Transverse colon (tissue), 4 donors: ENCODE measurements at regions of chr3 and their contacts with region 1.

Region 1: DNA sequence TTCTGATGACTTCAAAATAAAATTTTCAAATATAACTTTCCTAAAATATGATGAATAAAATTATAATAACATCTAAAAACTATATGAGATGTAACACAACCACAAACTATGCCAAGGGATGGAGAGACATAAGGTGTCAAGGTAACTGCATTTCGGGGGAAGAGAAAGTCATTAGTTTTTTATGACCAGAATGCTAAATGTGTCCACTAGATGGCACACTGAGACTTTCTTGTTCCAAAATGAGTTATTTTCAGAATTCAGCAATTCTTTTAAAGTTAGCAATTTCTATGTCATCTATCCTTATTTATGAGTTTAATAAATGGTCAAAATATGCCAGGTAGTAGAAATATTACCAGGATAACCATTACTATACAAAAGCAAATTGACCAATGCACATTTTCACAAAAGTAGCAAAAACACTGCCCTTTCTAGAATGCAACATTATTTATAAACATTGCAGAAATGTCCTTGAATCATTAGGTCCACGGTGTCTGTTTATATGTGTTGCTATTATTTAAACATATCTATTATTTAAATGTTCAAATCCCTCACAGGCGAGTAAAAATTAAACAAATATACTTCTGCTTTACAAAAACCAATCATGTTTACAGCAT is 374.2 kb downstream of the PLCL2 start:
- DNase-seq: no peak
- H3K4me3 ChIP-seq: no peak overlapping the region
- H3K27ac ChIP-seq: no peak overlapping the region
- H3K4me1 ChIP-seq: no peaks in the 10 kb centered on the region
- H3K27me3 ChIP-seq: no peaks in the 10 kb centered on the region
- CTCF ChIP-seq: peak; percentile 63 to 73 (median 69)
- EP300 ChIP-seq: no peak
- POLR2A ChIP-seq: no peak

Region 2: DNA sequence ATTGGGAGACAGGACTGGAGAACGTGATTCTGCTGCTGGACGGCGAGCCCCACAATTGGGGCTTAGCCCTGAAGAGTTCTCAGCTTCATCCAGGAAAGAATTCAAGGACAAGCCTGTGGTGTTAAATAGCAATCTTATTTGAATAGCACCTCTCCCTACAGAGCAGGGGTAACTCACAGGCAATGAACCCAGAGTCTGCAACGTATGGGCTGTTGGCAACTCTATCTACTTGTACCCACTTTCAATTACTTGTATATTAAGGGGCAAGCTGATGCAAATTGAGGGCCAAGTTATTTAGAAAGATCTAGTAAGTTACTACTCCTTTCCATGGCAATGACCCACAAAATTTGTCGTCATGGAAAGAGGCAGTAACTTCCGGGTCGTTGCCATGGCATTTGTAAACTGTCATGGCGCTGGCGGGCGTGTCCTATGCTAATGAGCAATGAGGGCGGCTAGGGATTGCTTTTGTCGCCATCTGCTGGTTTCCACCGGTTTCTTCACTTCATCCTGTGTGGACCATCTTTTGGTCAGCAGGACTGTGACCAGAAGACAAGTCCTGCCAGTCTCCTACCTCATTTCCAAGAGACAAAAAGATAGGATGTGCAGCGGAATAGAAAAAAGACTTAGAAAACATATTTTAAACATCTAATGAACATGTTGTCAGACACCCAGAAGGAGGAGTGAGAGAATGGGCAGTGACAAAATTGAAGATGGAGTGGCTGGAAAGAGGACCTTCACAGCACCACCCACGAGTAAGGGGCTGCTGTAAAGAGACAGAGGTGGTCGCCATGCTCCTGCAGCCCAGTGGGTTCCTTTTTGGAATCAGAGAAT is 1880.8 kb before region 1 on chr3:
- in situ Hi-C with region 1: no loop called
- intact Hi-C with region 1: no loop called
- DNase-seq: peak; percentile 96
- H3K4me3 ChIP-seq: no peak overlapping the region
- H3K27ac ChIP-seq: peak overlapping the region; percentile 57 to 69 (median 67)
- H3K4me1 ChIP-seq: peaks cover 3 to 15% (median 6%) of the 10 kb centered on the region in 4 donors
- H3K27me3 ChIP-seq: no peaks in the 10 kb centered on the region
- CTCF ChIP-seq: peak; percentile 71 to 87 (median 80)
- EP300 ChIP-seq: peak; percentile 61
- POLR2A ChIP-seq: no peak

Region 3: DNA sequence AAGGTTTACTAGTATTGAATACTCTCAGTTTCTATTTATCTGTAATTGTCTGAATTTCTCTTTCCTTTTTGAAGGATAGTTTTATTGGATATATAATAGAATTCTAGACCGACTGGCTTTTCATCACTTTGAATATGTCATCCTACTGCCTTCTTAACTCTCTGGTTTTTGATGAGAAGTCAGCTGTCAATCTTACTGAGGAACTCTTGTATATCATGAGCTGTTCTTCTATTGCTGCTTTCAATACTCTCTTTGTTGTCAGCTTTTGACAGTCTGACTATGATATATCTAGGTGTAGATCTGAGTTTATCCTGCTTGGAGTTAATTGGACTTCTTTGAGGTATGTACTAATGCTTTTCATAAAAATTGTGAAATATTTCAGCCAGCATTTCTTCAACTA is 40.3 kb before region 1 on chr3:
- in situ Hi-C with region 1: no loop called
- intact Hi-C with region 1: no loop called
- DNase-seq: no peak
- H3K4me3 ChIP-seq: no peak overlapping the region
- H3K27ac ChIP-seq: no peak overlapping the region
- H3K4me1 ChIP-seq: no peaks in the 10 kb centered on the region
- H3K27me3 ChIP-seq: no peaks in the 10 kb centered on the region
- CTCF ChIP-seq: no peak
- EP300 ChIP-seq: no peak
- POLR2A ChIP-seq: no peak

Region 4: DNA sequence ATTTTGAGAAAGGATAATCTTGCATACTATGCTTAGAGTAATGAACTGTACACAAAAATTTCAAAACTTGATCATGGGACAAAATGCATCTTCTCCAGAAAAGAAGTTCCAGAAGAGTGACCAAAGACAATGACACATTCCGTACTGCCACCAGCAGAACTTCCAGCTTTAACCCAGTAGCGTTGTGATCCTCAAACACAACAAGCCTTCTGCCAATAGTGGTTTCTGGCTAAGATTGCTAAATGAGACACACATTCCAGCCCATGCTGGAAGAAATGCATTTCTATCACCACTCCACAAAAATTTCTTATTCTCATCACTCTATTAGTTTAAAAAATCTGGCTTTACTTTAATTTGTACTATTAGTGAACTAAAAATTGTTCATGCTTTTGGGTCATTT is 148.6 kb after region 1 on chr3:
- in situ Hi-C with region 1: loop called (anchors 5 to 10 kb)
- intact Hi-C with region 1: no loop called
- DNase-seq: no peak
- H3K4me3 ChIP-seq: no peak overlapping the region
- H3K27ac ChIP-seq: no peak overlapping the region
- H3K4me1 ChIP-seq: no peaks in the 10 kb centered on the region
- H3K27me3 ChIP-seq: no peaks in the 10 kb centered on the region
- CTCF ChIP-seq: no peak
- EP300 ChIP-seq: no peak
- POLR2A ChIP-seq: no peak

Region 5: DNA sequence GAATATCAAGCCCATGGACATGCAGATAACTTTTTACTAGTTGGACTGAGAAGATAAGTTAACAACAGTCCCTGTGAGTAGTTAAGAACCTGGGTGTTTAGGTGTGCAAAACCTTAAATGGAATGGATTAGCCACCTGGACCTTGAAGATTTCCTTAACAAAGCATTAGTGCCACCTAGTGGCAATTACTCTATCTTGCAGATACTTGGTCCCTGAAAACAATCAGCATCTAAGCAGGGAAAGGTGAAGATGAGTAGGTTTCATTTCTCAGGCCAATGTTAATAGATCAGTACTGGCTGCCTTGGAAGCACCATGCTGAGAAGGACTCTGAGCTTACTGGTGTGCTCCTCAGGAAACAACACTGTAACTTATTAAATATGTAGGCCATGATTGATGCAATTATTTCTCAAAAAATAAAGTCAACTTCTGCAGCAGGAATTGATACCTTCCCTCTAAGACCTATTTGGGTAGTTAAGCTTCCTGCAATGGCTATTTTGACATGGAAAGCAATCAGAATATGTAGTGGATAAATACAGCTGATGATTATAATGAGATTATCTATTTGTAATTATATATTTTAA is 154.1 kb after region 1 on chr3:
- in situ Hi-C with region 1: loop called (anchors 5 to 10 kb)
- intact Hi-C with region 1: no loop called
- DNase-seq: no peak
- H3K4me3 ChIP-seq: no peak overlapping the region
- H3K27ac ChIP-seq: no peak overlapping the region
- H3K4me1 ChIP-seq: no peaks in the 10 kb centered on the region
- H3K27me3 ChIP-seq: no peaks in the 10 kb centered on the region
- CTCF ChIP-seq: peak; percentile 60 to 72 (median 69)
- EP300 ChIP-seq: no peak
- POLR2A ChIP-seq: no peak